ENCODE measurements at regions of chr2 and their contacts with region 1.

Region 1: GRCh38 chr2:226943862-226944620 is 108.2 kb downstream of the RHBDD1 start:
- DNase-seq: no peak
- H3K4me3 ChIP-seq: no peak overlapping the region
- H3K27ac ChIP-seq: no peak overlapping the region
- H3K4me1 ChIP-seq: no peaks in the 10 kb centered on the region
- H3K27me3 ChIP-seq: no peaks in the 10 kb centered on the region
- CTCF ChIP-seq: no peak

Region 2: GRCh38 chr2:226932443-226932842 is 11.6 kb before region 1 on chr2:
- CTCF ChIA-PET with region 1: no interaction called
- POLR2A ChIA-PET with region 1: no interaction called
- intact Hi-C with region 1: loop called (anchors 1 kb)
- DNase-seq: no peak
- H3K4me3 ChIP-seq: no peak overlapping the region
- H3K27ac ChIP-seq: no peak overlapping the region
- H3K4me1 ChIP-seq: no peaks in the 10 kb centered on the region
- H3K27me3 ChIP-seq: no peaks in the 10 kb centered on the region
- CTCF ChIP-seq: no peak

Region 3: DNA sequence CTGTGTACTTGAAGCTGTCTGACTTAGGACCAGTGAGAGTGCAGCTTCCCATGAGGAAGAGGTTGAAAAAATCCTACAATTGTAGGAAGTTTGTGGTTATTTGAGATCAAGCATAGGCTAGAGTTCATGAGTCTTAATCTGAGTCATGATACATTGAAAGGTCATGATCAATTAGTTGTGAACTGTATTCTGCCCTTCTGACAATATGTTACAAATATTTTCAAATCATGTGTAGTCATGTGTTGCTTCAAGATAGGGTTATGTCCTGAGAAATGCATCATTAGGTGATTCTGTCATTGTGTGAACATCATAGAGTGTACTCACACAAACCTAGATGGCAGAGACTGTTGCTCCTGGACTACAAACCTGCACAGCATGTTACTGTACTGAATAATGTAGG is 312.6 kb after region 1 on chr2:
- CTCF ChIA-PET with region 1: no interaction called
- POLR2A ChIA-PET with region 1: no interaction called
- intact Hi-C with region 1: no loop called
- DNase-seq: no peak
- H3K4me3 ChIP-seq: no peak overlapping the region
- H3K27ac ChIP-seq: no peak overlapping the region
- H3K4me1 ChIP-seq: no peaks in the 10 kb centered on the region
- H3K27me3 ChIP-seq: no peaks in the 10 kb centered on the region
- CTCF ChIP-seq: no peak